ENCODE measurements at regions of chr7 and their contacts with region 1.

Region 1: DNA sequence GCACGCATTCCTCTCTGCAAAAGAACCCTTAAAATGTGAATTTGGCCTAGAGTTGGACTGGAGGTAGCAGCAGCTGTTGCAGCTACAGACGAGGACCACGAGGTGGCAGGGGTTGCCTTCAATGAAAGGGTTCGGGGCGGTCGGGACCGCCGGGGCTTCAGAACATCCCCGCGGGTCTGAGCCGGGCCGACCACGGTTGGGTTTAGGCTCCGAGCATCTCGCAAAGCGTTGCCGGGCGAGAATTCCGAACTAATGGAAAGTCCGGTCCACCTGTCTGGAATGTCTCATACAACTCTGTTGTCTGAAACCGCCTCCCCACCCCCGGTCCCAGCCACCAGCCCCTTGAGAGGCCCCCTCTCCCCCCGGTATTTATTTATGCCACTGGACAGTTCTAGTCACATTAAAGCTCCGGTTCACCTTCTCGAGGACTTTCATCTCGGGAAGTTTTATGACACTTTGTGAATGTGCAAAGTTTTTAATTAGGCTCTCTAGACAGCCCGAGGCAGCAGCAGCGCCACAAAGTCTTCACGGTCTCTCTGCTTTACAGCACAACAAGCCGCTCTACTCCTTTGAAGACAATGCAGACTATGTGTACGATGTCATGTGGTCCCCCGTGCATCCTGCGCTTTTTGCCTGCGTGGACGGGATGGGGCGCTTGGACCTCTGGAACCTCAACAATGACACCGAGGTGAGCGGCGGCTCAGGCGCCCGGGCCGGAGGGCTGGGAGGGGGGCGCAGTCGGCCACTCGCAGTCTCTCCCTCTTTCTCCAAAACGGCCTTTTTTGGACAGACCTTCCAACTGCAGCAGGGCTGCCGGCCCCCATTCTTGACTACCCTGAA is 246.2 kb downstream of the SLC25A13 start:
- DNase-seq: peak; percentile 48 to 73 (median 59)
- ATAC-seq: peak; percentile 89 to 98 (median 95)
- H3K4me3 ChIP-seq: peak overlapping the region; percentile 24 to 71 (median 54)
- H3K27ac ChIP-seq: no peak overlapping the region
- H3K4me1 ChIP-seq: peaks cover 0 to 9% (median 4%) of the 10 kb centered on the region in 12 donors
- H3K27me3 ChIP-seq: peaks cover 0 to 23% (median 0%) of the 10 kb centered on the region in 9 donors
- CTCF ChIP-seq: peak; percentile 66 to 91 (median 80)
- POLR2A ChIP-seq: no peak

Region 2: GRCh38 chr7:95690367-95690947 is 385.3 kb before region 1 on chr7:
- intact Hi-C with region 1: no loop called
- DNase-seq: peak in 2 of 5 donors; percentile 11 to 18
- ATAC-seq: peak; percentile 26 to 64 (median 56)
- H3K4me3 ChIP-seq: peak overlapping the region in 2 of 12 donors; percentile 11 to 42
- H3K27ac ChIP-seq: no peak overlapping the region
- H3K4me1 ChIP-seq: peaks cover 0 to 7% (median 0%) of the 10 kb centered on the region in 12 donors
- H3K27me3 ChIP-seq: no peaks in the 10 kb centered on the region
- CTCF ChIP-seq: peak; percentile 39 to 76 (median 64)
- POLR2A ChIP-seq: no peak

Region 3: DNA sequence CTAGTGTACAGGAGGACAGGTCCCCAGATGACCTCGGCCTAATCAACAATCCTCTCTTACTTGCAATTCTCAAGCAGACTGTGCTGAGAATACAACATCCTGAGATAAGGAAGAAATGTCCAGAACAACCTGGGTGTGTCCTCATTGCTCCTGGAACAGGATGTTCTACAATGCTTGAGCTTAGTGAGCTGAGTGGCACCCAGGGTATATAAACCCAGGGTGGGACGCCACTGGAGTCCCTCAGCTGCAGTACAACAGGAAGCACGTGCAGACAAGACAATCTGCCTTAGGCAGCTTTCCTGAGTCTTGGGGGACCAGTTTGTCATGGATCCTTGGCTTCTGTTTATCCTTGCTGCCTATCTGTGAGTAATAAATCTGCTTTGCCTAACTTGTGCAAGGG is 273.8 kb after region 1 on chr7:
- intact Hi-C with region 1: no loop called
- DNase-seq: peak in 1 of 5 donors; percentile 58
- ATAC-seq: peak; percentile 84 to 94 (median 88)
- H3K4me3 ChIP-seq: no peak overlapping the region
- H3K27ac ChIP-seq: peak overlapping the region in 5 of 12 donors; percentile 10 to 68 (median 45)
- H3K4me1 ChIP-seq: no peaks in the 10 kb centered on the region
- H3K27me3 ChIP-seq: no peaks in the 10 kb centered on the region
- CTCF ChIP-seq: no peak
- POLR2A ChIP-seq: peak in 1 of 2 donors; percentile 12

Region 4: DNA sequence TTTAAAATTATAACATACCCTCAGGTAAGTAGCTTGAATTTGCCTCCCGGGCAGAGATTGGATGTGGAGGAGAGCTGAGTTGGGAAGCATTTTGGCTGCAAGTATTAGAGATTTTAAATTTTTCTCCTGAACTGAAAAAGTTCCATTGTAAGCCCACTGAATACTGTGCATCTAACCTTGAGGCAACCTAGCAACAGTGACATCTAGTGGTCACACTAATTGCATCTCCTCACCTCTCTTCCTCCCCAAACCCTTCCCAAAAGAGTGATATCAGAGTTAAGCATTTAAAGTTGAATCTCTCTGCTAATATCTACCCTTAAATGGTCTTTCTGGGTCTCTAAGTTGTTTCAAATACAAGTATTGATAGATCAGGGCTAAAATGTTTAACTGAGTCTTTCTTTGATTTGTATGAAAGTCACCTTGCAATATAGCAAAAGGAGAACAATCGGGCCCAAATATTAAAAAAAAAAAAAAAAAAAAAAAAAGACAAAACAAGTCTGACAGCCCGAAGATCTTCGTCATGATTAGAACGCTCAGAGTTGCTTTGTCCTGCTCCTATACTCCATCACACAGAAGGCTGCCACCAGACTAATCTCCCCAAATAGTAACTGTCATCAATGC is 989.3 kb after region 1 on chr7:
- intact Hi-C with region 1: loop called in 1 of 10 experiments (anchors 10 kb)
- DNase-seq: peak in 1 of 5 donors; percentile 13
- ATAC-seq: peak in 3 of 4 donors; percentile 52 to 78 (median 70)
- H3K4me3 ChIP-seq: no peak overlapping the region
- H3K27ac ChIP-seq: no peak overlapping the region
- H3K4me1 ChIP-seq: no peaks in the 10 kb centered on the region
- H3K27me3 ChIP-seq: peaks cover 0 to 12% (median 0%) of the 10 kb centered on the region in 9 donors
- CTCF ChIP-seq: peak; percentile 58 to 80 (median 70)
- POLR2A ChIP-seq: no peak

Measured in heart left ventricle (tissue), 16 donors.